Ascending aorta (tissue), 2 donors: ENCODE measurements at regions of chr3 and their contacts with region 1.

Region 1: GRCh38 chr3:66971891-66972551 is 26.1 kb upstream of the KBTBD8 start:
- DNase-seq: peak in 1 of 2 donors; percentile 71
- H3K4me3 ChIP-seq: peak overlapping the region; percentile 41 to 49
- H3K27ac ChIP-seq: no peak overlapping the region
- H3K4me1 ChIP-seq: no peaks in the 10 kb centered on the region
- H3K27me3 ChIP-seq: no peaks in the 10 kb centered on the region
- CTCF ChIP-seq: peak; percentile 45 to 81 (median 67)

Region 2: DNA sequence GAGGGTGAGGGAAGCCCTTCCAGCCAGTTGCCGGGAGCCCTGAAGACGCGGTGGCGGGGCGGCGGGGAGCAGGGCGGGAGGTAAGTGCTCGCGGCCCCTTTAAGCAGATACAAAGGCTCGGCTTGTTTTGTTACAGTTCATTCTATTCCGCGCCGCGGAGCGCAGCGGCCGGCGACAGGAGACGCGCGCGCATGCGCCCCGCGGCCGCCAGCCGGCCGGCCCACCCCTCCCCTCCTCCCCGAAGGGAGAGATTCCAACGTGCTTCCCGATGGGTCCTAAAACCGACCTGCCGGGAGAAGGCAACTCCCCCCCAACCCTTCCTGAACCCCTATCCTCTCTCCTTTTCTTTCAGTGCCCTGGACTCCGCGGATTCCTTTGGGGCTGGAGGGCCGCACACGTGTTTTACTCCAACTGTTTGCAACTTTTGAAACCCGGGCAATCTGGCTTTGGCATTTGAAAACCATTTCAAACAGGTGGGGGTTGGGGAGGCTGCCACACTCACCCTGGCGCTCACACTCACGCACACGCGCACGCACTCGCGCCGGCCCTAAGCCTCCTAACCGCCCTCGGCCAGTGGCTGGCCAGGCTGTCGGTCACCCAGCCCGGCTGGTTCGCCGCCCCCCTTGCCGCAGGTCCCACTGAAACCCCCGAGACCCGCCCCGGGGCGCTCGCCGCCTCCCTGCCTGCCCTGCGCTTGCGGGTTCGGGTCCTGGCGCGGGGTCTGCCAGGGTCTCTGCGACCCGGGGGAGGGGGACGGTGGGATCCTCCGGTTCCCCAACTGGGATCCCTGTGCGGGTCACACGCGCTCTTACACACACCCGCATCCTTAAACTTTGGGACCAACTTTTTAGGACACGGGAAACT is 933.1 kb before region 1 on chr3 and contains the start of gene MAGI1:
- intact Hi-C with region 1: no loop called
- DNase-seq: peak; percentile 56 to 94
- H3K4me3 ChIP-seq: peak within 1 kb of the TSS; percentile 77 to 80
- H3K27ac ChIP-seq: peak within 1 kb of the TSS; percentile 93 to 96
- H3K4me1 ChIP-seq: peaks cover 0 to 15% of the 10 kb centered on the region in 2 donors
- H3K27me3 ChIP-seq: no peaks in the 10 kb centered on the region
- CTCF ChIP-seq: no peak
- total RNA-seq, gene MAGI1: 28.4 TPM

Region 3: DNA sequence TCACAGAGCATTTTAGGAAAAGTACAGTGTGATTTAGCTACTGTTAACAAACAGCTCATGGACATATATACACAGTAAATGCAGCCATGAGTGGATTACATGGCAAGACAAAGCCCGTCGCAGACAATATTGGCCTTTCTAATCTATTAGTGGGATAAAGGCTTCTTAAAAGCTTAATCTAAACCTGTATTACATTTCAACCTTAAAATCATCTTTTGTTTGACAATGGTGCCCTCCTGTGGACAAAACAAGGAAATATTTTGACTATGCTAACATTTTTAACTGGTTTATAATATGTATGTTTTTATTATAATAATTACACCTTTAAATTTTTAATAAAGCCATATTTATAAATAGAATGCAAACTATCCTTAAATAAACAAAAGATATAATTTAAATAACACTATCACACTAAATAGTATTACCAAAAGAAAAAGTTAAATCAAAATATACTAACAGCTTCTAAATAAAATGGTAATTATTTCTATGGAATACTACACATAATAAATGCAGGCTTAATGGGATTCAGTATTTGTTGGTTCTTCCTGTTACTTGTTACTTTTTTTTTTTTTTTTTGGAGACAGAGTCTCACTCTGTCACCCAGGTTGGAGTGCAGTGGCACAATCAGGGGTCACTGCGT is 1921.7 kb after region 1 on chr3:
- intact Hi-C with region 1: loop called (anchors 5 kb)
- DNase-seq: no peak
- H3K4me3 ChIP-seq: no peak overlapping the region
- H3K27ac ChIP-seq: no peak overlapping the region
- H3K4me1 ChIP-seq: no peaks in the 10 kb centered on the region
- H3K27me3 ChIP-seq: no peaks in the 10 kb centered on the region
- CTCF ChIP-seq: peak in 2 of 3 experiments; percentile 38 to 58